Ovary (tissue), 10 donors: ENCODE measurements at regions of chr3 and their contacts with region 1.

Region 1: GRCh38 chr3:125141596-125142419 is 70.7 kb downstream of the SLC12A8 start:
- DNase-seq: peak; percentile 61 to 78 (median 67)
- H3K4me3 ChIP-seq: peak overlapping the region; percentile 34
- H3K27ac ChIP-seq: peak overlapping the region in 1 of 2 donors; percentile 57
- H3K4me1 ChIP-seq: peaks cover 11% of the 10 kb centered on the region
- H3K27me3 ChIP-seq: no peaks in the 10 kb centered on the region
- CTCF ChIP-seq: peak in 1 of 3 donors; percentile 32
- EP300 ChIP-seq: no peak
- POLR2A ChIP-seq: no peak

Region 2: GRCh38 chr3:125055913-125056745 is 85.7 kb before region 1 on chr3 and contains the start of gene HEG1:
- intact Hi-C with region 1: loop called in 2 of 4 experiments (anchors 5 to 10 kb)
- DNase-seq: peak; percentile 84 to 91 (median 88)
- H3K4me3 ChIP-seq: peak within 1 kb of the TSS; percentile 84
- H3K27ac ChIP-seq: peak within 1 kb of the TSS; percentile 95
- H3K4me1 ChIP-seq: peaks cover 17% of the 10 kb centered on the region
- H3K27me3 ChIP-seq: no peaks in the 10 kb centered on the region
- CTCF ChIP-seq: no peak
- EP300 ChIP-seq: no peak
- POLR2A ChIP-seq: peak; percentile 60
- total RNA-seq, gene HEG1: 17.4 to 54.7 (median 35.6) TPM

Region 3: GRCh38 chr3:125398954-125399353 is 257.1 kb after region 1 on chr3:
- intact Hi-C with region 1: no loop called
- DNase-seq: no peak
- H3K4me3 ChIP-seq: no peak overlapping the region
- H3K27ac ChIP-seq: no peak overlapping the region
- H3K4me1 ChIP-seq: no peaks in the 10 kb centered on the region
- H3K27me3 ChIP-seq: no peaks in the 10 kb centered on the region
- CTCF ChIP-seq: no peak
- EP300 ChIP-seq: no peak
- POLR2A ChIP-seq: no peak